AG04449 (cell line): ENCODE measurements at regions of chr7 and their contacts with region 1.

Region 1: DNA sequence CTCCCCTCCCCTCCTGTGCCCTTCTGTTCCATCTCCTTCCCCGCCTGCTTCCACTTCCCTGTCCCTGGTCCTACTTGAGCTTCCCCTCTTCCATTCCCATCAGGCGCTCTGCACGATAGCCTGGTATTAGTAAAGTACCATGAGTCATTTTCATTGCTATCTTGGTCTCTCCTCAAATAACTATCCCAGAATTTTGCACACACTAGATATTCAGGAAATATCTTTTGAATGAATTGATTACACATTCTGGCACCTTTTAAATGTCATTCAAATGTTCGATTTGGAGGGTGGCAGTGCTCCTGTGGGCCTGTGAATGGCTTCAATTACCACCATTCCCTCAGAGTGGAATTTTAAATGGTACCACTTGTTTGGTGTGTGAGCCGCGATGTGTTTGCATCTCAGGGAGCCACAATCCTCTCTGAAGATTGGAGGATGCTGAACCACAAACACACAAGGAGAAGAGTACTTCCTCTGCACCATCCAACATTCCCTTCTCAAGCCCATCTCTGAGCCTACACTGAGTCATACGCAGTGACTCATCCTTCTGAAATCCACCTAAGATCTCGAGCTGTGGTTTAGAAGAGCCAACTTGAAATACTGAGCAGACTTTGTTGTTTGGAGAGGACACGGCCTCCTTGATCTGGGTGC is 81.7 kb downstream of the BMPER start:
- DNase-seq: peak; percentile 96
- H3K4me3 ChIP-seq: no peak overlapping the region
- CTCF ChIP-seq: no peak

Region 2: DNA sequence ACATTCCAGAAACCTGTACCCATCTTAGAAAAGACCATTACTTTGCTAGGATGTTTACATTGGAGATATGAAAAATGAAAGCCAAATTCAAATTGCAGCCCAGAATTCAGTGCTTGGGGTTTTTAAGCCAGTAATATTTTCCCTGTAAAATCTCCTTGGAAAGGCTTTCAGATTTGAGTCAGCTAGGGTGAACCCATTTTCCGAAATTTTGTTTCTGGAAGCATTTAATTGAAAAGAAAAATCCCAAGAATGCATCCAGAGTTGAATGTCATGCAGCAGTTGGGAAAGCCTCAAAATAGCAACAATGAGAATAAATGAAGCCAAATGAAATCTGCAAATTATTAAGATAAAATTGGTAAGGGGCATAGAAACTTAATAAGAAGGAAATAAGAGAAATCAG is 24.6 kb after region 1 on chr7:
- CTCF ChIA-PET with region 1: interaction called, 12 read pairs
- POLR2A ChIA-PET with region 1: no interaction called
- DNase-seq: no peak
- H3K4me3 ChIP-seq: no peak overlapping the region
- CTCF ChIP-seq: no peak

Region 3: DNA sequence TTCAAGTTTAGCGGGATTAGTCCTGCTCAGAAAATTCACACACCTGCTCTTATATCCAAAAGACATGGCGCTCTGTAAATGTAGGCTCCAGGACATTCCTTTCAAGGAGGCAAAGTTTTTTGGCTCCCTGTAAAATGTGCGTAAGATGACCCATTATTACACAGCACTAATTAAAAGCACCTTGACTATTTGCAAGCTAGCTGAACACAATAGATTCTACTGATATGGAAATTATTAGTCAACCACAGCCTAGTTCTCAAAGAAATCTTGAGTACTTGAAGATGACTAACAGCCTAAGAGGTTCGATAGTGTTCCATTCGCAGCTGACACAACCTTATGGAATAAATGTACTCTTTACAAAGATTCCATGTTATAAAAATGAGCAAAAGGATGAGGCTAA is 93.5 kb after region 1 on chr7:
- CTCF ChIA-PET with region 1: interaction called, 84 read pairs
- POLR2A ChIA-PET with region 1: no interaction called
- DNase-seq: no peak
- H3K4me3 ChIP-seq: no peak overlapping the region
- CTCF ChIP-seq: no peak

Region 4: GRCh38 chr7:34133983-34134782 is 147.1 kb after region 1 on chr7:
- CTCF ChIA-PET with region 1: interaction called, 23 read pairs
- POLR2A ChIA-PET with region 1: no interaction called
- DNase-seq: no peak
- H3K4me3 ChIP-seq: no peak overlapping the region
- CTCF ChIP-seq: peak; percentile 76